Activated CD4-positive, alpha-beta T cell treated with anti-CD3 and anti-CD28 coated beads, Interleukin-2, amount 10 ng/mL, durations not matched to agents 24 days and 14 days (primary cell): ENCODE measurements at regions of chr21 and their contacts with region 1.

Region 1: DNA sequence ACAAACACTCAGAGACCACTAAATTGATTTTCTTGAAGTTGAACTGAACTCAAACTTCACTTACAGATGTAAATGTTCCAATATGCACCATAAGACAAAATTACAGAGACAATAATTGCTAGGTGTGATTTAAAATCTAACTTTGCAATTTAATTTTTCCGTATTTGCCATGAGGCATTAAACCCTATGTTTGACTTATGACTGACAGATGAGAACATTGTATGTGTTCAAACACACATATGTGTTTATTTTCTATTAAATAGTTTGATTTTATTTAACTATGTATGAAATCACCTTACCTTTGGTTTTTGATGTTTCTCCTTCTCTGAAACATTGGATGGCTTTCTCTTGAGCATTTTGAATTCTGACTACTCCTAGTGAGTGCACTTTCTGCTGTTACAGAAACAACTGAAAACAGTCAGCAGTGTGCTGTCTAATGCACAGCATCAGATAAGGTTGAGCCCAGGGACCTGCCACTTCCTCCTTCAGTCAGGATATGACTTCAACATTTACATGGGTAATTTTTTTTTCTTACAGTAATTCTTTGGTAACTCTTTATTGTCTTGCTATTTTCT is at the start of gene SAMSN1:
- DNase-seq: peak; percentile 92
- H3K4me3 Mint-ChIP-seq: peak within 1 kb of the TSS; percentile 95
- H3K27ac Mint-ChIP-seq: peak within 1 kb of the TSS; percentile 91
- H3K4me1 Mint-ChIP-seq: peaks cover 52% of the 10 kb centered on the region
- H3K27me3 Mint-ChIP-seq: no peaks in the 10 kb centered on the region
- total RNA-seq, gene SAMSN1: 86.4 and 92.7 TPM in 2 replicates

Region 2: GRCh38 chr21:14454016-14455009 is 91.7 kb before region 1 on chr21:
- intact Hi-C with region 1: loop called (anchors 5 kb)
- DNase-seq: peak; percentile 61
- H3K4me3 Mint-ChIP-seq: peak overlapping the region; percentile 40
- H3K27ac Mint-ChIP-seq: peak overlapping the region; percentile 87
- H3K4me1 Mint-ChIP-seq: peaks cover 52% of the 10 kb centered on the region
- H3K27me3 Mint-ChIP-seq: no peaks in the 10 kb centered on the region

Region 3: GRCh38 chr21:14523234-14523633 is 22.8 kb before region 1 on chr21:
- intact Hi-C with region 1: loop called (anchors 1 kb)
- DNase-seq: peak; percentile 81
- H3K4me3 Mint-ChIP-seq: peak overlapping the region; percentile 75
- H3K27ac Mint-ChIP-seq: peak overlapping the region; percentile 86
- H3K4me1 Mint-ChIP-seq: peaks cover 56% of the 10 kb centered on the region
- H3K27me3 Mint-ChIP-seq: no peaks in the 10 kb centered on the region

Region 4: GRCh38 chr21:14559102-14559501 is 13.1 kb after region 1 on chr21:
- intact Hi-C with region 1: no loop called
- DNase-seq: no peak
- H3K4me3 Mint-ChIP-seq: no peak overlapping the region
- H3K27ac Mint-ChIP-seq: peak overlapping the region; percentile 48
- H3K4me1 Mint-ChIP-seq: peaks cover 57% of the 10 kb centered on the region
- H3K27me3 Mint-ChIP-seq: no peaks in the 10 kb centered on the region

Region 5: DNA sequence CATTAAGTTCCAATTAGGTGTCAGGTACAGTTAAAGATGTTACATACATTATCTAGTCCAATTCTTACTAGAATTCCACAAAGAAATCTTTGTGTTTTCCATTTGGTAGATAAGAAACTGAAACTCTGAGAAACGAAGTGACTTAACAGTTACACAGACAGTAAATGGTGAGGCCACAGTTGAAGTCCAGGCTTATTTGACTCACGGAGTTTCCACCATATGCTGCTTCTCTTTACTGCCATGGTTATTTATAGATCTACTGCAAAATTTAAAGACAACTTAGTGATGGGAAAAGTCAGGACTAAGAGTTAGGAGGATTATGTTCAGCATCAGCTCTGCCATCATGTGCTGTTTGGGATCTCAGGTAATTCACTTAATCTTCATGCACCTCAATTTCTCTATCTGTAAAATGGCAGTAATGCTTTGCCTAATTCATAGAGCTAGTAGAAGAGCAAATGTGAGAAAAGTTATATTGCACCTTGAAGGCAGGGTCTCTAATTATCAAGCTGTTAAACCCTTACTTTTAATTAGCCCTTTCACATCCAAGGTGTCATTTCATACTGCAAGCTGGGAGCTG is 26.3 kb after region 1 on chr21:
- intact Hi-C with region 1: loop called (anchors 1 kb)
- DNase-seq: no peak
- H3K4me3 Mint-ChIP-seq: peak overlapping the region; percentile 64
- H3K27ac Mint-ChIP-seq: peak overlapping the region; percentile 80
- H3K4me1 Mint-ChIP-seq: peaks cover 44% of the 10 kb centered on the region
- H3K27me3 Mint-ChIP-seq: no peaks in the 10 kb centered on the region

Region 6: GRCh38 chr21:14630556-14631069 is 84.6 kb after region 1 on chr21:
- intact Hi-C with region 1: loop called (anchors 1 kb)
- DNase-seq: no peak
- H3K4me3 Mint-ChIP-seq: no peak overlapping the region
- H3K27ac Mint-ChIP-seq: peak overlapping the region; percentile 78
- H3K4me1 Mint-ChIP-seq: peaks cover 24% of the 10 kb centered on the region
- H3K27me3 Mint-ChIP-seq: no peaks in the 10 kb centered on the region

Region 7: DNA sequence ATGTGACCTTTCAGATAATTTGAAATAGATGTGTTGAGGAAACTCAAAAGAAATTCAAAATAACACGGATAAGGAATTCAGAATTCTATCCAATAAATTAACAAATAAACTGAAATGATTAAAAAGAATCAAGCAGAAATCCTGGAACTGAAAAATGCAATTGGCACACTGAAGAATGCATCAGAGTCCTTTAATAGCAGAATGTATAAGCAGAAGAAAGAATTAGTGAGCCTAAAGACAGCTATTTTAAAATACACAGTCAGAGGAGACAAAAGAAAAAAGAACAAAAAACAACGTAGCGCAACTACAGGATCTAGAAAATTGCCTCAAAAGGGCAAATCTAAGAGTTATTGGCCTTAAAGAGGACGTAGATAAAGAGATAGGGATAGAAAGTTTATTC is 99.7 kb after region 1 on chr21:
- intact Hi-C with region 1: no loop called
- DNase-seq: no peak
- H3K4me3 Mint-ChIP-seq: no peak overlapping the region
- H3K27ac Mint-ChIP-seq: no peak overlapping the region
- H3K4me1 Mint-ChIP-seq: no peaks in the 10 kb centered on the region
- H3K27me3 Mint-ChIP-seq: no peaks in the 10 kb centered on the region

Region 8: GRCh38 chr21:14737922-14738321 is 191.9 kb after region 1 on chr21:
- intact Hi-C with region 1: loop called (anchors 5 kb)
- DNase-seq: peak; percentile 87
- H3K4me3 Mint-ChIP-seq: no peak overlapping the region
- H3K27ac Mint-ChIP-seq: no peak overlapping the region
- H3K4me1 Mint-ChIP-seq: peaks cover 37% of the 10 kb centered on the region
- H3K27me3 Mint-ChIP-seq: no peaks in the 10 kb centered on the region